GM12878 (cell line): ENCODE measurements at regions of chr1 and their contacts with region 1.

Region 1: DNA sequence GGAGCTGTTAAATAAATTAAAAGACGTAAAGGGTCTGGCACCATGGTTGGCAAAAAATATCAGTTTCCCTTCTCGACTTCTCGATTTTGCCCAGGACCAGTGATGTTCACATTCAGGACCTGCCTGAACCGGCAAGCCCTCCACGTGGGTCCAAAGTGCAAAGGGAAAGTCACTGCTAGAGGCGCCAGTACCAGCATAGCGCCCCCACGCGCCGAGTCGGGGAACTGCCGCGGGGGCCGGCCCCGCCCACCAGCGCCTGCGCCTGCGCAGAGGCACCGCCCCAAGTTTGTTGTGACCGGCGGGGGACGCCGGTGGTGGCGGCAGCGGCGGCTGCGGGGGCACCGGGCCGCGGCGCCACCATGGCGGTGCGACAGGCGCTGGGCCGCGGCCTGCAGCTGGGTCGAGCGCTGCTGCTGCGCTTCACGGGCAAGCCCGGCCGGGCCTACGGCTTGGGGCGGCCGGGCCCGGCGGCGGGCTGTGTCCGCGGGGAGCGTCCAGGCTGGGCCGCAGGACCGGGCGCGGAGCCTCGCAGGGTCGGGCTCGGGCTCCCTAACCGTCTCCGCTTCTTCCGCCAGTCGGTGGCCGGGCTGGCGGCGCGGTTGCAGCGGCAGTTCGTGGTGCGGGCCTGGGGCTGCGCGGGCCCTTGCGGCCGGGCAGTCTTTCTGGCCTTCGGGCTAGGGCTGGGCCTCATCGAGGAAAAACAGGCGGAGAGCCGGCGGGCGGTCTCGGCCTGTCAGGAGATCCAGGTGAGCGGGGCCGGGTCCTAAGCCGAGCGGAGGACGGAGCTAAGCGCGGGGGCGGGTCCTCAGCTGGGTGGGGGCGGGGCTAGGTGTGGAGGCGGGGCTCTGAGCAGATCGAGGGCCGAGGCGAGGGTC is at the start of gene PINK1:
- DNase-seq: no peak
- ATAC-seq: peak; percentile 97
- H3K4me3 ChIP-seq: peak within 1 kb of the TSS; percentile 93
- H3K27ac ChIP-seq: no peak within 1 kb of the TSS
- H3K4me1 ChIP-seq: peaks cover 8% of the 10 kb centered on the region; the same call in 1 of the 2 replicates
- H3K27me3 ChIP-seq: no peaks in the 10 kb centered on the region
- CTCF ChIP-seq: peak; percentile 95 to 100 (median 95)
- EP300 ChIP-seq: no peak
- POLR2A ChIP-seq: peak; percentile 49; the same call in 1 of the 2 replicates
- RAD21 ChIP-seq: peak; percentile 27; the same call in 1 of the 2 replicates
- polyA plus RNA-seq, gene PINK1: 0.42 TPM in 1 of 2 experiments, not detected in the other

Region 2: GRCh38 chr1:20212685-20213331 is 420.6 kb before region 1 on chr1:
- CTCF ChIA-PET with region 1: no interaction called
- POLR2A ChIA-PET with region 1: no interaction called
- RAD21 ChIA-PET with region 1: no interaction called
- SMC1A ChIA-PET with region 1: no interaction called
- in situ Hi-C with region 1: no loop called
- intact Hi-C with region 1: loop called (anchors 10 kb)
- DNase-seq: no peak
- ATAC-seq: peak; percentile 89
- H3K4me3 ChIP-seq: no peak overlapping the region
- H3K27ac ChIP-seq: no peak overlapping the region
- H3K4me1 ChIP-seq: no peaks in the 10 kb centered on the region; the same call in 1 of the 2 replicates
- H3K27me3 ChIP-seq: peaks cover 3 to 10% of the 10 kb centered on the region in 2 experiments; a peak in 2 of 4 replicates
- CTCF ChIP-seq: peak; percentile 67 to 72 (median 71)
- EP300 ChIP-seq: no peak
- POLR2A ChIP-seq: no peak
- RAD21 ChIP-seq: peak; percentile 77

Region 3: DNA sequence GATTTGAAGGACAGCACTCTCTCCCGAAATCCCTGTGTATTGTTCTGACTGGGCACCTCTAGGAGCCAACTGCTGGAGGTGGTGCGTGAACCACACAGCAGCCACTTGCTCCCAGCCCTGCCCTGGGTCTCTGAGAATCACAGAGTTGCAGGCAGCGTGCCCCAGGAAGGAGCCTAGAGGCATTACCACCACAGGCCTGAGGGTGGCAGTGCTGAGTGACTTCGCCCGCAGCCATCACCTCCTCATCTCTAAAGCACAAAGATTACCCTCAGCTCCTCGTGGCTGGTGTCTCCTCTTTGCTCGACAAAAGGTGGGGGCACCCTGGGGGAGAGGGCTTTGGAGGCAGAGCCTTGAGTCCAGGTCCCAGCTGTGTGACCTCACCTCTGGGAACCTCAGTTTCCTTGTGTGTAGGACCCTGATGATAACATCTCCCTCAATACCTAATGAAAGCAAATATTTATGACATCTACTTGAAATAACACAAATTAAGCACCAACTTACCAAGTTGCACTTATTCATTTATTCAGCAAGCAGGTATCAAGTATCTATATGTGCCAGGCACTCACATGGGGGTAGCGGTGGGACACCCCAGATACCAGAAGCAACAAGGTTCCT is 256.4 kb before region 1 on chr1:
- CTCF ChIA-PET with region 1: no interaction called
- POLR2A ChIA-PET with region 1: no interaction called
- RAD21 ChIA-PET with region 1: no interaction called
- SMC1A ChIA-PET with region 1: no interaction called
- in situ Hi-C with region 1: no loop called
- intact Hi-C with region 1: no loop called
- DNase-seq: no peak
- ATAC-seq: peak; percentile 89
- H3K4me3 ChIP-seq: no peak overlapping the region
- H3K27ac ChIP-seq: no peak overlapping the region
- H3K4me1 ChIP-seq: peaks cover 4% of the 10 kb centered on the region; the same call in 1 of the 2 replicates
- H3K27me3 ChIP-seq: 0 out of 4 replicates have a peak, but pooled peaks cover 0 to 4% of the 10 kb centered on the region in 2 experiments
- CTCF ChIP-seq: peak; percentile 75 to 89 (median 84)
- EP300 ChIP-seq: no peak
- POLR2A ChIP-seq: no peak
- RAD21 ChIP-seq: peak; percentile 50

Region 4: DNA sequence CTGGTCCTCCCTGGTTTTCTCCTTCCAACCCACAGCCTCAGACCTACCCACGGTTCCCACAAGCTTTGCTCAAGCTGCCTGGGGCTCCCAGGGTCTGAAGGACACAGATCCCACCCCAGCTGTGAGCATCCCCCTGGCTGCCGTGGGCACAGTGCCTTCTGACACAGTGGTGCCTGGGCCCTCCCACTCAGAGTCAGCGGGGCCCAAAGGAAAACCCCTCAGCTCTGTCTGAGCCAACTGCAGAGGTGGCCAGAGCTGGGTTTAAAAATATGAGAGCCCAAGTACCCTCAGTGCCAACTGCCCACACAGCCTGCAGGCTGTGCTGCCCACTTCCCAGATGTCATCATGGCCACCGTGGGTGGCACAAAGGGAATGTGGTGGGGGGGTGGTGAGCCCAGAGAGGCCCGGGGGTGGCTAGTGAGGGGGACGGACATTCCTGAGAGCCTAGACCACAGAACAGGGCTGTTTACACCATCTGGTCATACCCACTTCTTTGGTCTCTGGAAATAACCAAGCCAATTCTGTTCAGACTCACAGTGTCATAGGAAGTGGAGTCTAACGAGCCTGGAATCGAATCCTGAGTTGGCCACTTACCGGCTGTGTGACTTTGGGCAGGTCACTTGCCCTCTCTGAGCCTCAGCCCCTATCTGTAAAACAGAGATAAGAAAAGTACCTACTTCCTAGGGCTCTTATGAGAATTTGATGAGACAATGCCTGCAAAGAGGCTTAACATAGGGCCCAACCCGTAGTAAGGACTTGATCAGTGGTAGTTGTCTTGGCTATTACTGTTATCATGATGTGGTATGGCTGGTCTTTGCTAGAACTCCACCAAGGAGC is 232.9 kb before region 1 on chr1:
- CTCF ChIA-PET with region 1: no interaction called
- POLR2A ChIA-PET with region 1: no interaction called
- RAD21 ChIA-PET with region 1: no interaction called
- SMC1A ChIA-PET with region 1: no interaction called
- in situ Hi-C with region 1: no loop called
- intact Hi-C with region 1: no loop called
- DNase-seq: no peak
- ATAC-seq: no peak
- H3K4me3 ChIP-seq: no peak overlapping the region
- H3K27ac ChIP-seq: no peak overlapping the region
- H3K4me1 ChIP-seq: no peaks in the 10 kb centered on the region
- H3K27me3 ChIP-seq: peaks cover 8 to 13% of the 10 kb centered on the region in 2 experiments
- CTCF ChIP-seq: no peak
- EP300 ChIP-seq: no peak
- POLR2A ChIP-seq: no peak
- RAD21 ChIP-seq: no peak

Region 5: GRCh38 chr1:20521960-20522861 is 111.2 kb before region 1 on chr1:
- CTCF ChIA-PET with region 1: interaction called, 11 read pairs
- POLR2A ChIA-PET with region 1: no interaction called
- RAD21 ChIA-PET with region 1: interaction called, 10 read pairs
- SMC1A ChIA-PET with region 1: interaction called, 3 read pairs
- in situ Hi-C with region 1: loop called (anchors 5 kb)
- intact Hi-C with region 1: no loop called
- DNase-seq: peak; percentile 20
- ATAC-seq: peak; percentile 62
- H3K4me3 ChIP-seq: no peak overlapping the region
- H3K27ac ChIP-seq: no peak overlapping the region
- H3K4me1 ChIP-seq: no peaks in the 10 kb centered on the region
- H3K27me3 ChIP-seq: no peaks in the 10 kb centered on the region; a peak in 1 of 4 replicates
- CTCF ChIP-seq: peak; percentile 85 to 89 (median 87)
- EP300 ChIP-seq: no peak
- POLR2A ChIP-seq: no peak
- RAD21 ChIP-seq: peak; percentile 93

Region 6: GRCh38 chr1:20574686-20575540 is 58.5 kb before region 1 on chr1:
- CTCF ChIA-PET with region 1: interaction called, 31 read pairs
- POLR2A ChIA-PET with region 1: no interaction called
- RAD21 ChIA-PET with region 1: interaction called, 3 read pairs
- SMC1A ChIA-PET with region 1: interaction called, 6 read pairs
- in situ Hi-C with region 1: no loop called
- intact Hi-C with region 1: no loop called
- DNase-seq: no peak
- ATAC-seq: peak; percentile 84
- H3K4me3 ChIP-seq: no peak overlapping the region
- H3K27ac ChIP-seq: no peak overlapping the region
- H3K4me1 ChIP-seq: no peaks in the 10 kb centered on the region
- H3K27me3 ChIP-seq: no peaks in the 10 kb centered on the region
- CTCF ChIP-seq: peak; percentile 48 to 62 (median 61)
- EP300 ChIP-seq: no peak
- POLR2A ChIP-seq: no peak
- RAD21 ChIP-seq: peak; percentile 41

Region 7: GRCh38 chr1:20661207-20662109 is 28.0 kb after region 1 on chr1 and contains the start of gene DDOST:
- CTCF ChIA-PET with region 1: interaction called, 16 read pairs
- POLR2A ChIA-PET with region 1: interaction called, 8 read pairs
- RAD21 ChIA-PET with region 1: interaction called, 4 read pairs
- SMC1A ChIA-PET with region 1: interaction called, 3 read pairs
- in situ Hi-C with region 1: no loop called
- intact Hi-C with region 1: no loop called
- DNase-seq: peak; percentile 94
- ATAC-seq: peak; percentile 98
- H3K4me3 ChIP-seq: peak within 1 kb of the TSS; percentile 81
- H3K27ac ChIP-seq: peak within 1 kb of the TSS; percentile 88
- H3K4me1 ChIP-seq: 0 out of 2 replicates have a peak, but pooled peaks cover 10% of the 10 kb centered on the region
- H3K27me3 ChIP-seq: no peaks in the 10 kb centered on the region
- CTCF ChIP-seq: peak; percentile 41 to 52 (median 45)
- EP300 ChIP-seq: no peak
- POLR2A ChIP-seq: peak; percentile 85
- RAD21 ChIP-seq: no peak
- polyA plus RNA-seq, gene DDOST: 100 to 159 TPM